K562 (cell line): ENCODE measurements at regions of chr4 and their contacts with region 1.

Region 1: DNA sequence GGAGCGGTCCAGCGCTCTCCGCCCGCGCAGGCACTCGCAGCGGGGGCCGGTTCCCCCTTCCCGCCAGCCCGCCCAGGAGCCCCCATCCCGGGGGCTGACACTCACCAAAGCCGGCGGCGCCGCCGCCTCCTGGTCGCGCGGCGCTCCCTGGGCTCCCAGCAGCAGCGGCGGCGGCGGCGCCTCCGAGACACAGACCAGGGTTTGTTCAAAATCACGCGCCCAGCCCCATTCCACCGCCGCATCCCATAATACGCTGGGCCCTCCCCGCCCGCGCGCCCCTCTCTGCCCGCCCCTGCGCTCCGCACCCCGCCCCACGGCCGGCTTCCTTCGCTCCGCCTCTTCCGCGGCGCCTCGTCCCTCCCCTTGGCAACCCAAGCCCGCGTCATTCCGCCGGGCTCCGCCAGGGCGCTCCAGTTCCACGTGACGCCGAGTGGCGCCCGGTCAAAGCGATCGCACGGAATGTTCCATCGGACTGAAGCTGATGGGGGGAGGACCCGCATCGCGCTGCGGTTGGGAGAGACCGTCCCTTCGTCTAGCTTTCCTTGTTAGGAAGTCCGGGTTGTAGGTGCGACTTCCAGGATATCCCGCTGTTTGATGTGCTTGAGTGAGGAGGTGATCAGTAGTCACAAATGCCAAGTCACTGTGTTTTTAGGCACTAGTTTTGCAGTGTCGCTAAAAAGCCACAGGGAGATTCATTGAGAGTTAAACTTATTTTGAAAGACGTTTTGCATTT is 2.2 kb upstream of the LIN54 start:
- DNase-seq: peak; percentile 94 to 99 (median 96)
- ATAC-seq: peak; percentile 85
- H3K4me3 ChIP-seq: peak overlapping the region; percentile 87
- H3K27ac ChIP-seq: peak overlapping the region; percentile 89
- H3K4me1 ChIP-seq: peaks cover 6 to 16% of the 10 kb centered on the region in 2 experiments; a peak in 3 of 5 replicates
- H3K27me3 ChIP-seq: no peaks in the 10 kb centered on the region
- CTCF ChIP-seq: peak; percentile 60 to 74 (median 63); a peak in 4 of 6 replicates
- EP300 ChIP-seq: peak; percentile 65
- POLR2A ChIP-seq: peak; percentile 87
- RAD21 ChIP-seq: peak; percentile 56 to 66

Region 2: GRCh38 chr4:82373816-82374625 is 638.8 kb before region 1 on chr4 and contains the start of gene HNRNPD:
- CTCF ChIA-PET with region 1: no interaction called
- POLR2A ChIA-PET with region 1: no interaction called
- in situ Hi-C with region 1: no loop called
- intact Hi-C with region 1: loop called (anchors 10 kb)
- DNase-seq: peak; percentile 88 to 99 (median 92)
- ATAC-seq: peak; percentile 85
- H3K4me3 ChIP-seq: peak within 1 kb of the TSS; percentile 94
- H3K27ac ChIP-seq: peak within 1 kb of the TSS; percentile 100
- H3K4me1 ChIP-seq: peaks cover 8 to 9% of the 10 kb centered on the region in 2 experiments; a peak in 4 of 5 replicates
- H3K27me3 ChIP-seq: no peaks in the 10 kb centered on the region
- CTCF ChIP-seq: no peak
- EP300 ChIP-seq: no peak; the same call in 1 of the 2 replicates
- POLR2A ChIP-seq: peak; percentile 88
- RAD21 ChIP-seq: no peak; a peak in 1 of 4 replicates
- polyA plus RNA-seq, gene HNRNPD: 152 to 187 TPM

Region 3: GRCh38 chr4:82900331-82901128 is 112.3 kb before region 1 on chr4 and contains the start of gene THAP9:
- CTCF ChIA-PET with region 1: no interaction called
- POLR2A ChIA-PET with region 1: interaction called, 14 read pairs
- in situ Hi-C with region 1: no loop called
- intact Hi-C with region 1: loop called (anchors 2 kb)
- DNase-seq: peak; percentile 94 to 99 (median 96)
- ATAC-seq: peak; percentile 92
- H3K4me3 ChIP-seq: peak within 1 kb of the TSS; percentile 75
- H3K27ac ChIP-seq: peak within 1 kb of the TSS; percentile 100
- H3K4me1 ChIP-seq: peaks cover 5 to 11% of the 10 kb centered on the region in 2 experiments; a peak in 4 of 5 replicates
- H3K27me3 ChIP-seq: no peaks in the 10 kb centered on the region
- CTCF ChIP-seq: 0 out of 6 replicates have a peak, but pooled peaks of 1 of the 3 experiments have one; percentile 6
- EP300 ChIP-seq: peak; percentile 40; the same call in 1 of the 2 replicates
- POLR2A ChIP-seq: peak; percentile 94
- RAD21 ChIP-seq: no peak
- polyA plus RNA-seq, gene THAP9: 4.8 to 5.6 TPM

Region 4: DNA sequence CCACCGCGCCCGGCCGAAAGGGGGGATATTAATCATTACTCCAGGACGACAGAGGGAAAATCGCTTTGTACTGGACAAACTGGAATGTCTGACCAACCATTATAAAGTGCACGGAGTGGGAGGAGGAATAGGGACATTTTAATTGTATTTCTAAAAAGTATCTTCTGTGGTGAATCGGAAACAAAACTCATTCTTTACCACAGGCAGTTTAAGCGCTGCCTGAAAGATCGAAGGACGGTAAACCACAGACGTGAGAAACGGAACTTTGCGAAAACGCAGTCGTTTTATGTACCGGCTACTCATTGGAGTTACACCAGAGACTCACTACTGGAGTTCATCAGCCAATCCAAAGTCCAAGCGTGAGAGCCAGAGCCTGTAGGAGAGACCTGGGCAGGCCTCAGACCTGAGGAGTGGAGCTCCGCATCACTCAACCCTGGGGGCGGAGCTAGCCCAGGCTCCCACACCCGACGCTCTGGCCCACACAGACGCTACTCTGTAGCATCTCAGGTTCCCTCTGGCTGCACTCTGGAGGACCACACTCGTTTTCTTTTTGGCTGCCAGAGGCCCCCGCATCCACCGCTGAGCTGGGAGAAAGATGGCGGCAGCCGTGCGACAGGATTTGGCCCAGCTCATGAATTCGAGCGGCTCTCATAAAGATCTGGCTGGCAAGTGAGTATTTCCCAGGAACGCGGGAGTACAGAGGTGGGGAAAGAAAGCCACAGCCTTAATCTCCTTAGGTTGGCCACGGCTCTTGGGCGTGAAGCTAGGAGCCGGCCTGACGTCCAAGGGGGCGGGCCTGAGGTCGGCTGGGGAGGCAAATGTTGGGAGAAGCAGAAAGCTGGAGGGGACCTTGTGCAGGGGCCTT is 22.0 kb after region 1 on chr4 and contains the start of gene COPS4:
- CTCF ChIA-PET with region 1: interaction called, 6 read pairs
- POLR2A ChIA-PET with region 1: interaction called, 11 read pairs
- in situ Hi-C with region 1: no loop called
- intact Hi-C with region 1: loop called (anchors 1 kb)
- DNase-seq: peak; percentile 95 to 99 (median 96)
- ATAC-seq: peak; percentile 97
- H3K4me3 ChIP-seq: peak within 1 kb of the TSS; percentile 56
- H3K27ac ChIP-seq: peak within 1 kb of the TSS; percentile 86
- H3K4me1 ChIP-seq: peaks cover 6 to 12% of the 10 kb centered on the region in 2 experiments; a peak in 4 of 5 replicates
- H3K27me3 ChIP-seq: no peaks in the 10 kb centered on the region
- CTCF ChIP-seq: no peak
- EP300 ChIP-seq: peak; percentile 55; the same call in 1 of the 2 replicates
- POLR2A ChIP-seq: peak; percentile 95
- RAD21 ChIP-seq: peak in 1 of 2 experiments; percentile 21; a peak in 1 of 4 replicates
- polyA plus RNA-seq, gene COPS4: 171 to 180 TPM

Region 5: DNA sequence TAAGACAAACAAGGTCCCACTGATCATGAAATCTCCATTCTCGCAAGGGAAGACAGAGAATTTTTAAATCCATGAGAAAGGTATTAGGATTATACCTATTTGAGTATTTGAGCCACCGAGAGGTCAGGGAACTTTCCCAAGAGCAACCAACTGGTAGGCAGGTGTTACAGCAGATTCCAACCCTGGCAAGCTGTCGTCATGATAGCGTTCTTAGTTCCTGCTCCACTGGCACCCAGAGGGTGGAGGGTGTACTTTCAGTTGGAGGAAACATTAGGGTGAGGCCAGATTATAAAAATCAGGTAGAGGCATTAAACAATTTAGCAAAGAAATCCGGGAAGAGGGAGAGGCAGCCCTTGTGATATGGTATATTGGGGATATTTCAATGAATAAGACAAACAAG is 248.5 kb after region 1 on chr4:
- CTCF ChIA-PET with region 1: no interaction called
- POLR2A ChIA-PET with region 1: no interaction called
- in situ Hi-C with region 1: no loop called
- intact Hi-C with region 1: loop called (anchors 5 kb)
- DNase-seq: no peak
- ATAC-seq: no peak
- H3K4me3 ChIP-seq: no peak overlapping the region
- H3K27ac ChIP-seq: no peak overlapping the region
- H3K4me1 ChIP-seq: peaks cover 0 to 5% of the 10 kb centered on the region in 2 experiments; a peak in 3 of 5 replicates
- H3K27me3 ChIP-seq: no peaks in the 10 kb centered on the region
- CTCF ChIP-seq: no peak
- EP300 ChIP-seq: no peak
- POLR2A ChIP-seq: no peak
- RAD21 ChIP-seq: no peak

Region 6: GRCh38 chr4:83284193-83285054 is 271.6 kb after region 1 on chr4 and contains the start of gene COQ2:
- CTCF ChIA-PET with region 1: no interaction called
- POLR2A ChIA-PET with region 1: no interaction called
- in situ Hi-C with region 1: no loop called
- intact Hi-C with region 1: loop called (anchors 1 kb)
- DNase-seq: peak; percentile 92 to 95 (median 94)
- ATAC-seq: peak; percentile 94
- H3K4me3 ChIP-seq: peak within 1 kb of the TSS; percentile 75
- H3K27ac ChIP-seq: peak within 1 kb of the TSS; percentile 88
- H3K4me1 ChIP-seq: peaks cover 5 to 15% of the 10 kb centered on the region in 2 experiments; a peak in 4 of 5 replicates
- H3K27me3 ChIP-seq: no peaks in the 10 kb centered on the region
- CTCF ChIP-seq: peak; percentile 23 to 45 (median 34); a peak in 4 of 6 replicates
- EP300 ChIP-seq: no peak
- POLR2A ChIP-seq: peak; percentile 85
- RAD21 ChIP-seq: peak; percentile 14 to 47; a peak in 2 of 4 replicates
- polyA plus RNA-seq, gene COQ2: 1.9 to 2.9 TPM